Vagina (tissue), 2 donors: ENCODE measurements at regions of chr1 and their contacts with region 1.

Region 1: GRCh38 chr1:226967665-226968064 is 27.6 kb downstream of the COQ8A start:
- DNase-seq: no peak
- H3K4me3 ChIP-seq: no peak overlapping the region
- H3K27ac ChIP-seq: no peak overlapping the region
- H3K4me1 ChIP-seq: no peaks in the 10 kb centered on the region
- H3K27me3 ChIP-seq: no peaks in the 10 kb centered on the region
- CTCF ChIP-seq: no peak
- POLR2A ChIP-seq: no peak

Region 2: GRCh38 chr1:226895644-226896043 is 72.0 kb before region 1 on chr1:
- intact Hi-C with region 1: loop called (anchors 2 kb)
- DNase-seq: no peak
- H3K4me3 ChIP-seq: no peak overlapping the region
- H3K27ac ChIP-seq: no peak overlapping the region
- H3K4me1 ChIP-seq: peaks cover 6% of the 10 kb centered on the region
- H3K27me3 ChIP-seq: no peaks in the 10 kb centered on the region
- CTCF ChIP-seq: no peak
- POLR2A ChIP-seq: no peak

Region 3: GRCh38 chr1:226912587-226913176 is 55.0 kb before region 1 on chr1:
- intact Hi-C with region 1: no loop called
- DNase-seq: peak in 1 of 2 donors; percentile 69
- H3K4me3 ChIP-seq: no peak overlapping the region
- H3K27ac ChIP-seq: no peak overlapping the region
- H3K4me1 ChIP-seq: no peaks in the 10 kb centered on the region
- H3K27me3 ChIP-seq: no peaks in the 10 kb centered on the region
- CTCF ChIP-seq: peak in 2 of 3 experiments; percentile 17 to 26
- POLR2A ChIP-seq: no peak

Region 4: DNA sequence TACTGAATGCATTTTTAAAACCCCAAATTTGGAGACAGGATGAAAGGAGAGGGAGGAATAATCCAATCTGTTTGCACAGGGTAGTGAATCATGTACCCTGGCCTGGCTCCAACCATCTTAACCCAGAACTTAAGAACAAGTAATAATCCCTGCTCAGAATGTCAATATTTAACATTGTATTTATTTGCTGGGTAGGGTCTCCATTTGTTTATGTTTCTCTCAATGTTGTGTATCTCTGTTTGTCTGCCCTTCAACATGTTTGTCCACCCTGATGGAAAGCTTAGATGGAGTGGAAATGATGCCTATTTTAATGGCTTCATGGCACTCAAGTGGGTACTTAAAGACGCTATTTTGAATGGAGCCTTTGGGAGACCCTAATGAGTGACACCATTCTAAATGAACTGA is 405.1 kb after region 1 on chr1:
- intact Hi-C with region 1: no loop called
- DNase-seq: no peak
- H3K4me3 ChIP-seq: no peak overlapping the region
- H3K27ac ChIP-seq: no peak overlapping the region
- H3K4me1 ChIP-seq: no peaks in the 10 kb centered on the region
- H3K27me3 ChIP-seq: no peaks in the 10 kb centered on the region
- CTCF ChIP-seq: no peak
- POLR2A ChIP-seq: no peak